ENCODE measurements at regions of chr5 and their contacts with region 1.

Region 1: DNA sequence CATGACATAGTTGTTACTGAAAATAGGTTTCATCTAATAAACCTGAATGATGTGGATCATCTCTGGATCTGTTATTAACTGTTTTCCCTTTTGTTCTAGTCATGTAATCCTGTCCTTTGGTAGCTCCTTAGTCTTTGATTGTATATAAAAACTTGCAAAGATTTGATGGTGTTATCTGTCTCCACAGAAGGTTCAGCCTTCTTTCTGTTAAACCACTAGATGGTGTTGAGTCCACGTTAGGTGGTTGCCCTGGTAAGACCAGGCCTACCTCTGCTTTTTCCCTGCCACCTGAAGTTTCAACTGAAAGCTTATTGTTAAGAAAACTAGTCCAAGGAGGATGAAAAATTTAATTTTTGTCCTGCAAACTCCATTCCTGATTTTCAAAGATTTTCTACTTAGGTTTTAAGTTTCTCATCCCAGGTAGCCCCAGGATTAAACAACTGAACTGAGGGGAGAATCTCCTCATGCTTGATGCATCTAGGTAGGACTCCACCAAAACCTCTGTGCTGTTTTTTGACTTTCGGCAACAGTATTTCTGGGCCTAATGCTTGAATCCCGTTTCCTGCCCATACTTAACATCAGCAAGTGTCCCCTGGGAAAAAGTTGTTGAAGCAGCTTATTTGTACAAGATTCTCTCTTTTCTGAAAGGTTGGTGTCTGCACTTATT is 68.5 kb downstream of the RICTOR start:
- DNase-seq: peak in 1 of 2 experiments; percentile 12
- H3K4me3 ChIP-seq: no peak overlapping the region
- H3K4me3 Mint-ChIP-seq: no peak overlapping the region
- H3K27ac Mint-ChIP-seq: no peak overlapping the region
- H3K4me1 ChIP-seq: no peaks in the 10 kb centered on the region
- H3K4me1 Mint-ChIP-seq: no peaks in the 10 kb centered on the region
- H3K27me3 ChIP-seq: no peaks in the 10 kb centered on the region
- H3K27me3 Mint-ChIP-seq: no peaks in the 10 kb centered on the region
- CTCF ChIP-seq: peak in 1 of 2 experiments; percentile 49

Region 2: DNA sequence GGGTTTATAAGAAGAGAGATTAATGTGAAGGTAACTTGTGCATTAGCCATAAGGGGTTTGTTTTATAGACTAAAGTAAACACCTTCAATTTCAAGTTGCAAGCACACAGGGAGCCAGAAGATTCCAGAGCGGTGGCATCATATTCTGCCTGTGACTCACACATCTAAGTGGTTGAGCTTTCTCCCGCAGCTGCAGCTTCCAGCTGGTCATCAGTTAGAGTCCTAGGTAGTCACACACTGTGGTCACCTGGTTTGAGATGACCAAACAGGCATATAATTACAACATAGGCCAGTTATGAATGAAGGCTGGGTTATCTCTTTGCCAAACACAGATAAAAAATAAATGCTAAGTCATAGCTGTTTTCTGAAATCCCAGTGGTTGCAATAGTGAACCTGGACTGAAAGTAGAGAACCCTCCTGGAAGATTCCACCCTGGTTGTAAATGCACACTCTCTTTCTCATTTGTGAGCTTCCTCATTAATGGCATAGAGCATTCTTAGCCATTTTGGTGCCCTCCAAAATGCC is 1337.1 kb before region 1 on chr5:
- CTCF ChIA-PET with region 1: no interaction called
- POLR2A ChIA-PET with region 1: no interaction called
- intact Hi-C with region 1: no loop called
- DNase-seq: peak; percentile 78 to 82
- H3K4me3 ChIP-seq: no peak overlapping the region
- H3K4me3 Mint-ChIP-seq: no peak overlapping the region
- H3K27ac Mint-ChIP-seq: peak overlapping the region; percentile 30
- H3K4me1 ChIP-seq: peaks cover 14% of the 10 kb centered on the region
- H3K4me1 Mint-ChIP-seq: peaks cover 7% of the 10 kb centered on the region
- H3K27me3 ChIP-seq: no peaks in the 10 kb centered on the region
- H3K27me3 Mint-ChIP-seq: no peaks in the 10 kb centered on the region
- CTCF ChIP-seq: no peak

Region 3: GRCh38 chr5:39080597-39081204 is 75.0 kb after region 1 on chr5:
- CTCF ChIA-PET with region 1: interaction called, 9 read pairs
- POLR2A ChIA-PET with region 1: no interaction called
- intact Hi-C with region 1: loop called (anchors 1 kb)
- DNase-seq: peak; percentile 58 to 71
- H3K4me3 ChIP-seq: no peak overlapping the region
- H3K4me3 Mint-ChIP-seq: no peak overlapping the region
- H3K27ac Mint-ChIP-seq: no peak overlapping the region
- H3K4me1 ChIP-seq: no peaks in the 10 kb centered on the region
- H3K4me1 Mint-ChIP-seq: no peaks in the 10 kb centered on the region
- H3K27me3 ChIP-seq: no peaks in the 10 kb centered on the region
- H3K27me3 Mint-ChIP-seq: peaks cover 3% of the 10 kb centered on the region
- CTCF ChIP-seq: peak; percentile 82 to 86

Region 4: DNA sequence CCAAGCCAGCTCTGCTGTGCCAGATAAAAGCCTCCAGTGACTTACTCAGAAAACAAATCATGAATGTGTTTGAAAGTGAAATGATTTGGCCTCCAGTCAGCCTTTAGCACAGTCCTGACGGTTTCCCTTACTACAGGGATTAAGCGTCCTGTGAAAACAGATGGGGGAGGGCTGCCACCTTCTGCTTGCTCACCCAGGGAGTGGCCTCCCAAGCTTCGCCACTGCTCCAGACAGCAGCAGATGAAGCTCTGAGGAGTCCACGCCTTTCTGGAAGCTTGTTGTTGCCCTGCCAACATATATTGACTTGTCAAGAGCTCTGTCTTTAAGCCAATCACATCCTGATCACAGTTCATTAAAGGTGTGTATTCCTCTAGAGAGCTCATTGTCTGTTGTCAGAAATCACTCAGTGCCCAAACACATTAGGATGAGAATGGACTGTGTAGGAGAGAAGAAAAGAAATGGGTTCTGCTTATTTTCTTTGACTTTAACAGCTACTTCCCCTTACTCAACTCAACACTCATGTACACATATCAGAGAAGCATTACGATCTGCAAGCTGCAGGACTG is 218.6 kb after region 1 on chr5:
- CTCF ChIA-PET with region 1: no interaction called
- POLR2A ChIA-PET with region 1: no interaction called
- intact Hi-C with region 1: no loop called
- DNase-seq: no peak
- H3K4me3 ChIP-seq: no peak overlapping the region
- H3K4me3 Mint-ChIP-seq: no peak overlapping the region
- H3K27ac Mint-ChIP-seq: no peak overlapping the region
- H3K4me1 ChIP-seq: peaks cover 24% of the 10 kb centered on the region
- H3K4me1 Mint-ChIP-seq: peaks cover 16% of the 10 kb centered on the region
- H3K27me3 ChIP-seq: no peaks in the 10 kb centered on the region
- H3K27me3 Mint-ChIP-seq: no peaks in the 10 kb centered on the region
- CTCF ChIP-seq: no peak

Measured in Caco-2 (cell line).